Activated CD4-positive, alpha-beta T cell treated with anti-CD3 and anti-CD28 coated beads, Interleukin-2, amount 10 ng/mL, durations not matched to agents 7 days and 5 days (primary cell): ENCODE measurements at regions of chr19 and their contacts with region 1.

Region 1: DNA sequence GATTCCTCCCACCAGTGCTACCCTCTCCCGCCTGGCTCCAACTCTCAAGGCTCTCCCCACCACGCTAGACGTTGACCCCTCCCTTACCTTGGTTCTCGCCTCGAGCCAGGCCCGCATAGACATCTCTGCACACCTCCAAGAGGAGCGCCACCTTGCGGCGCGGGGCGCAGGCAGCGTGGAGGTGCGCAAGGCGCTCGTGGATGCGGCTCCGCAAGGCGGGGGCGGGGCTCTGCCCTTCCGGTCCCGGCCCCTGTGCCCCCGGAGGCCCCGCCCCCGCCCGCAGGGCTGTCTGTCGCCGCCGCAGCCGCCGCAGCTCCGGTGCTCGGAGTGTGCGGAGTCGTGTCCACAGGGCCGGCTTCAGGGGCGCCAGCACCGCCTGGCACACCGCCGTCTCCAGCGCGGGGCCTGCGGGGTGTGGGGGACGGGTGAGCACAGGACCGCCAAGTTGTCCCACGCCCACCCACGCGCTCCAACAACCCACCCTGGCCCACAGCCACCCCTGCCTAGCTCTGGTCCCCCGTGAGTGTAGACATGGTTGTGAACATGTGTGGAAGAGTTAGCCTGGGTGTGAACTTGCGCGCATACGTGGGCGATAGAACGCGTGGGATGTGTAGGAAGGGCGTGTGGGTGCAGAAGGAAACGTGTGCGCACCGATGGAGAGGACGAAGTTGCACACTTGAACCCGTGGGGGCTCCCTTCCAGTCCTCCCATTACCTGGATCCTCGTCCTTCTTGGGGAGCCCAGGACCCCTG is 8.0 kb downstream of the RINL start:
- DNase-seq: peak; percentile 91
- H3K4me3 Mint-ChIP-seq: peak overlapping the region; percentile 84
- H3K27ac Mint-ChIP-seq: peak overlapping the region; percentile 86
- H3K4me1 Mint-ChIP-seq: peaks cover 51% of the 10 kb centered on the region
- H3K27me3 Mint-ChIP-seq: no peaks in the 10 kb centered on the region

Region 2: GRCh38 chr19:38851622-38852230 is 18.3 kb before region 1 on chr19:
- CTCF ChIA-PET with region 1: interaction called, 11 read pairs
- POLR2A ChIA-PET with region 1: interaction called, 4 read pairs
- DNase-seq: peak; percentile 93
- H3K4me3 Mint-ChIP-seq: peak overlapping the region; percentile 94
- H3K27ac Mint-ChIP-seq: peak overlapping the region; percentile 100
- H3K4me1 Mint-ChIP-seq: peaks cover 44% of the 10 kb centered on the region
- H3K27me3 Mint-ChIP-seq: no peaks in the 10 kb centered on the region

Region 3: DNA sequence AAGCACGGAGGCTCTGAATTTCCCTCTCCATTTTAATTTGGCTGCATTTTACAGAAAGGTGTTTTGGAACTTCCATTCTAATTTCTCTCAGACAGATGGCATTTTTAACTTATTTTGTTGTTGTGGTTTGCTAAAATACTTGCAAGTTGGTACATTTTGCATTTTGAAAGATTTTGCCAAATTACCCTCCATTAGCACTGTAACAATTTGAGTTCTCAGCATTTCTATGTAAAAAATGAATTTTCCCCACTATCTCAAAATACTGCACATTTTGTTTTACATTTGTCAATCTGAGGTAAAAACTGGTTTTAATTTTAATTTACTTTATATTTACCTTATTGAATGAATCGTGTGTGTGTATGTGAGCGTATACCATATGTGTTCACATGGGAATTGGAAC is 13.2 kb before region 1 on chr19:
- CTCF ChIA-PET with region 1: interaction called, 12 read pairs
- POLR2A ChIA-PET with region 1: no interaction called
- DNase-seq: no peak
- H3K4me3 Mint-ChIP-seq: no peak overlapping the region
- H3K27ac Mint-ChIP-seq: peak overlapping the region; percentile 88
- H3K4me1 Mint-ChIP-seq: peaks cover 36% of the 10 kb centered on the region
- H3K27me3 Mint-ChIP-seq: no peaks in the 10 kb centered on the region

Region 4: DNA sequence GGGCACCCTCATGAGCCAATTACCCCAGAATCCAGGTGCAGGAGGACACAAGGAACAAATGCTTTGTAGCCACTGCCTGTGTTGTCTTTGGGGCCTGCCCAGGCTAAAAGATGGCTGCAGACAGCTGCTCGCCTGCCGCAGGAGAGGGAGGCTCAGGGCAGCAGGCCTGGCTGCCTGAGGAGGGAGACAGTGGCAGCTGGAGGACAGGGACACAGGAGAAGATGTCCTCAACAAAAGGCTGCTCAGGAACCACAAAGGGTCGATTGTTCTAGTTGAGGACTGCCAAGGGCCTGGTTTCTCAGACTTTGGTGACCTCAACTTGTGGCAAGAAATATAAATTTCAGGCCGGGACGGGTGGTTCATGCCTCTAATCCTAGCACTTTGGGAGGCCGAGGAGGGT is 21.7 kb after region 1 on chr19:
- CTCF ChIA-PET with region 1: interaction called, 10 read pairs
- POLR2A ChIA-PET with region 1: no interaction called
- DNase-seq: no peak
- H3K4me3 Mint-ChIP-seq: no peak overlapping the region
- H3K27ac Mint-ChIP-seq: no peak overlapping the region
- H3K4me1 Mint-ChIP-seq: peaks cover 1% of the 10 kb centered on the region
- H3K27me3 Mint-ChIP-seq: no peaks in the 10 kb centered on the region

Region 5: GRCh38 chr19:38964738-38965137 is 94.7 kb after region 1 on chr19:
- CTCF ChIA-PET with region 1: no interaction called
- POLR2A ChIA-PET with region 1: no interaction called
- DNase-seq: no peak
- H3K4me3 Mint-ChIP-seq: no peak overlapping the region
- H3K27ac Mint-ChIP-seq: no peak overlapping the region
- H3K4me1 Mint-ChIP-seq: peaks cover 4% of the 10 kb centered on the region
- H3K27me3 Mint-ChIP-seq: peaks cover 15% of the 10 kb centered on the region

Region 6: GRCh38 chr19:39080431-39080830 is 210.4 kb after region 1 on chr19:
- CTCF ChIA-PET with region 1: no interaction called
- POLR2A ChIA-PET with region 1: no interaction called
- DNase-seq: no peak
- H3K4me3 Mint-ChIP-seq: no peak overlapping the region
- H3K27ac Mint-ChIP-seq: no peak overlapping the region
- H3K4me1 Mint-ChIP-seq: peaks cover 12% of the 10 kb centered on the region
- H3K27me3 Mint-ChIP-seq: peaks cover 44% of the 10 kb centered on the region